Esophagus squamous epithelium (tissue), 5 donors: ENCODE measurements at regions of chr14 and their contacts with region 1.

Region 1: DNA sequence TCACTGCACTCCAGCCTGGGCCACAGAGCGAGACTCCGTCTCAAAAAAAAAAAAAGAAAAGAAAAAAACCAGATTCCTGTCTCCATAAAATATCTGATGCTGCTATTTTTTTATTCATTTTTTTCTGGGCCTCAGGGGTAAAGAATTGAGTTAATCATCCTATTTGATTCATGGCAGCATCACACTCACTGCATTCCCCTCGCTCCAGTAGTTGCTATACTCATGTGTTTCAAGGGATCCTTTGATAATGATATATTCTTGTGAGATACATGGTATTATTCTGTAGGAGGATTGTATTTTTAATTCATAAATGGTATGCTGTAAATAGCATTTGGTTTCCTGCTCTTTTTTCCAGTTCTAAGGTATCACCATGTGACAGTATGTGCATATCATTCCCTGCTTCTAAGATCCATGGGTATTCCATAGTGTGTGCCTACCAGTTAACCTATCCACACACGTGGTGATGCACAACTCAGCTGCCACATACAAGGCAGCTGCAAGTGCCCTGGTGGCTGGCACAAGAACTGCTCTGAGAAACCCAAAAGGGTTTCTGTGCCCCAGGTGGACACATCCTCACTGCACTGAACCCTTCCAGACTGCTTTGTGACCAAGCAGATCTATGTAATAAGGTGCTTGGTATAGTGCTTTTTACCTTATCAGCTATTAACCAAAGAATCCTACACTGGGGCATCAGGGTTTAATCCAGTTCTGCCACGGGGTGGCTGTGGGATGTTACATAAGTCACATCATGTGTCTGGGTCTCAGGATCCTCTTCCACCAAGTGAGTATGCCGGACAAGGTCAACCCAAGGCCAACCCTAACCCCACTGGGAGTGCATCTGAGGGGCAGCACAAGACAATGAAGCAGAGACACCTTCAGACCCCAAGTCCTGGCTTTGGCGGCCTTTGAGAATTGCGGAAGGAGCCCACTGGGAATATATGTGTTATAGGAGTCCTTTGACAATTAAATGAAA is 74.6 kb downstream of the ZFP36L1 start:
- DNase-seq: no peak
- H3K4me3 ChIP-seq: no peak overlapping the region
- H3K27ac ChIP-seq: no peak overlapping the region
- H3K4me1 ChIP-seq: peaks cover 0 to 7% (median 5%) of the 10 kb centered on the region in 3 donors
- H3K27me3 ChIP-seq: no peaks in the 10 kb centered on the region
- CTCF ChIP-seq: peak in 5 of 6 experiments; percentile 30 to 68 (median 36)
- POLR2A ChIP-seq: no peak

Region 2: DNA sequence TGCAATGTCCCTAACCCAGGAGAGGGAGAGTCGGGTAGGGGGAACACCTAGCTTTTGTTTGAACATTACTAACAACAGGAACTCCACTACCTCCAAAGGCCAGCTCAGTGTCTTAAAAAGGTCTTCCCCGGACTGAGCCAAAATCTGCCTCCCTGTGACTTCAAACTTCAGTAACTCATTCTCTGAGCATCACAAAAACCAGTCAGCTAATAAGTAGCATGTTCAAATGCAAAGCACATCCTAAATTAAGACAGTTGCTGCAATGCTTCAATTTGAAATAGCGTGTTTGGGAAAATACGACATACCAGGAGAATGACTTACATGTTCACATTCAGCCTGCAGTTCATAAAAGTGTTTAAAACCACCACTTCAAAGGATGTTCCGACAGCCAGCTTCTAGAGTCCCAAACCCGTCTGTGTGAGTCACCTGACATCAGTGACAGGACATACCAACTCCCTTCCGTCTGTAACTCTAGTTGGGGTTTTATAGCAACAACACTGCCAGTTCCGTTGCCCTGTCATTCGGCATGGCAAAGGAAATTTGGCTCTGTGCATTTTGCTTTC is 61.5 kb after region 1 on chr14:
- intact Hi-C with region 1: loop called (anchors 10 kb)
- DNase-seq: no peak
- H3K4me3 ChIP-seq: peak overlapping the region in 1 of 4 donors; percentile 1
- H3K27ac ChIP-seq: peak overlapping the region; percentile 63 to 92 (median 86)
- H3K4me1 ChIP-seq: peaks cover 24 to 69% (median 39%) of the 10 kb centered on the region in 3 donors
- H3K27me3 ChIP-seq: no peaks in the 10 kb centered on the region
- CTCF ChIP-seq: no peak
- POLR2A ChIP-seq: peak in 1 of 4 donors; percentile 47